Mammary epithelial cell (primary cell): ENCODE measurements at regions of chr12 and their contacts with region 1.

Region 1: DNA sequence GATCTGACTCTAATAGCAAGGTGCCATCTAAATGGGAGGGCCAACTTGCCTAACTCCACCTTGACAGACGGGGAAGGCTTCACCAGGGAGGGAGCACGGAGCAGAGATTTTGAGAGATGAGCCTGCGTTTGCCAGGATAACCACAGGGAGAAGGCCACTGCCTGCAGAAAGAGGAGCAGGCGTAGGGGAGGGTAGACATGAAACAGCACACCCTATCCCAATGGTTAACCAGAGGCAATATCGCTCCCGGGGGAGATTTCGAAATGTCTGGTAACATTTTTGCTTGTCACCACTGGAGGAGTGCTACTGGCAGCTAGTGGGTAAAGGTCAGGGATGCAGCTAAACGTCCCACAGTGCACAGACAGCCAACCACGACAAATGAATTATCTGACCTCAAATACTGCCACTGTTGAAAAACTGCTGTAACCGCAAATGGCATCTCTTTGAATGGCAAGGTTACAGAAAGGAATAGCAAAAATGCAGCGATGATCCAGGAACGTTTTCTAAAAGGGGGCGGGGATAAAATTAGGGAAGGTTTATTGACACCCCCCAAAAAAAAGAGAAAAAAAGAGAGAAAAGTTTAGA is 126.0 kb upstream of the ATF7IP start:
- DNase-seq: peak; percentile 46
- H3K4me3 ChIP-seq: no peak overlapping the region
- H3K27ac ChIP-seq: no peak overlapping the region
- H3K4me1 ChIP-seq: peaks cover 5% of the 10 kb centered on the region
- H3K27me3 ChIP-seq: no peaks in the 10 kb centered on the region
- CTCF ChIP-seq: peak in 1 of 2 donors; percentile 18

Region 2: DNA sequence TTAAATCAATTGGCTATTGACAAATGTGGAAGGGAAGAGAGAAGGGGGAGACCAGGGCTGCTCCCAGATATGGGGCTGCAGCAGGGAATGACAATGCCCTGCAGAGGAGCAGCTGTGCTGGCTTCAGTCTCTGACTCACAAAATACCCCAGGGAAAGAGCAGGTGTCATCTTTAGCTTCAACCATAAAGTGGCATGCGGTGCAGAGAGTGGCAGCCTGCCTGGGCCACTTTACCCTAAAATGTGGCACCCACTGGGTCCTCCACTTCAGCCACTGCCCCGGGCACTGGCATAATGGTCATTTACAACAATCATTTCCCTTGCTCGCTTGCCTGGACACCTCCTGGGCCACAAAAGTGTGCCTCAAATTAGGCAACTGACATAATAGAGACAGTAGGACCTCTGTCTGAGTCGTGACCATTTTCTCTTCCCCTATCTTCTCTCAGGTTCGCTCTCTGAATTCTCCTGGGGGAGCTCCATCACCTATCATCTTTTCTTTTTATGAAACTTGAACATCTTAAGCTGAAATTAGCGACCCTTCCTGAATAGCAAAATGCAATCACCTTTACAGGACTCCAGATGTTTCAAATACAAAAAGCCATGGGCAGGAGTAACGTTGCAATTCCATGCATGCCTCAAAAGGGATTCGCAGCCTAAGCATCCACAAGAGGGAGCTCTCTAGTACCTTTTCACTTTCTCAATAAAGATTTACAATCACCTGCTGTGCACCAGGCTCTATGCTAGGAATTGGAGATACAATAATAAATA is 53.8 kb before region 1 on chr12:
- CTCF ChIA-PET with region 1: no interaction called
- dilution Hi-C with region 1: no loop called
- in situ Hi-C with region 1: no loop called
- intact Hi-C with region 1: loop called (anchors 1 kb)
- DNase-seq: peak; percentile 37
- H3K4me3 ChIP-seq: no peak overlapping the region
- H3K27ac ChIP-seq: no peak overlapping the region
- H3K4me1 ChIP-seq: no peaks in the 10 kb centered on the region
- H3K27me3 ChIP-seq: no peaks in the 10 kb centered on the region
- CTCF ChIP-seq: peak; percentile 69 to 80

Region 3: DNA sequence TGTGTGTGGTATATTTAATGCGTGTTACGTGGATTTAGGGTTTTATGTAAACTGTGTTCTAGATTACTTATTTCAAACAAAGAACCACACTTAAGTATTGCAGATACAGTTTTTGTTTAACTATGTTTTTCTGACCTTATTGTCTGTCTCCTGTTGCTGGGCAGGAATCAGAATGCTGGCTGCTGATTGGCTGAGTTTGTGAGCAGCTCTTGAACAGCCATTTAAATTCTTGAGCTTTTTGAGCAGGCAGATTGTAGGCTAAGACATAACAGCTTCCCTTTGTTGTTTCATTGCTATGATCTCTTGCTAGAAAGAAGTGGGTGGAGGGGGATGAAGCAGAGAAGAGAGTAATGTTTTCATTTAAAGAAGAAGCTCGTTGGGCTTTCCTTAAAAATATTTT is 178.3 kb after region 1 on chr12:
- CTCF ChIA-PET with region 1: no interaction called
- dilution Hi-C with region 1: no loop called
- in situ Hi-C with region 1: no loop called
- intact Hi-C with region 1: loop called (anchors 1 kb)
- DNase-seq: peak; percentile 74
- H3K4me3 ChIP-seq: no peak overlapping the region
- H3K27ac ChIP-seq: no peak overlapping the region
- H3K4me1 ChIP-seq: peaks cover 10% of the 10 kb centered on the region
- H3K27me3 ChIP-seq: no peaks in the 10 kb centered on the region
- CTCF ChIP-seq: no peak

Region 4: GRCh38 chr12:14514154-14514842 is 274.9 kb after region 1 on chr12:
- CTCF ChIA-PET with region 1: interaction called, 3 read pairs
- dilution Hi-C with region 1: no loop called
- in situ Hi-C with region 1: no loop called
- intact Hi-C with region 1: loop called (anchors 1 kb)
- DNase-seq: peak; percentile 84
- H3K4me3 ChIP-seq: no peak overlapping the region
- H3K27ac ChIP-seq: peak overlapping the region; percentile 75
- H3K4me1 ChIP-seq: peaks cover 16% of the 10 kb centered on the region
- H3K27me3 ChIP-seq: no peaks in the 10 kb centered on the region
- CTCF ChIP-seq: peak; percentile 78

Region 5: DNA sequence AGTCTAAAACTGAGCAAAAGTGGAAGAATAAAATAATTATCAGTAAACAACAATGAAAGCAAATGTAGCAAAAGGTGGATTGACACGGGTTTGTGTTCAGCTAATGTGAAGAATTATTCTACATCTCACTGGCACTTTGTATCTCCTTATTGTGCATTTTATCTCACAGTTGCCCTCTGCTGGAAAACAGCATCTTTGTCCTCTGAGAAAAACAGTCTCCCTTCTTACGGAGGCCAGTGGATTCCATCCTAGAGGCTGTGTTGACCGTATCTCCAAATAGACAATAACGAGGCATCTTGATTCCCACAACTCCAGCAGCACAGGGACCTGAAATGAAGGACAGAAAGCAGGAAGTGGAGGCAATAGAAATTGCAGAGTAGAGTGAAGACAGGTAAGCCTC is 379.5 kb after region 1 on chr12:
- CTCF ChIA-PET with region 1: interaction called, 5 read pairs
- dilution Hi-C with region 1: no loop called
- in situ Hi-C with region 1: loop called in 1 of 2 experiments (anchors 25 kb)
- intact Hi-C with region 1: loop called (anchors 1 kb)
- DNase-seq: peak; percentile 24
- H3K4me3 ChIP-seq: no peak overlapping the region
- H3K27ac ChIP-seq: no peak overlapping the region
- H3K4me1 ChIP-seq: no peaks in the 10 kb centered on the region
- H3K27me3 ChIP-seq: no peaks in the 10 kb centered on the region
- CTCF ChIP-seq: peak; percentile 41 to 64

Region 6: GRCh38 chr12:14716848-14717444 is 477.5 kb after region 1 on chr12:
- CTCF ChIA-PET with region 1: interaction called, 4 read pairs
- dilution Hi-C with region 1: no loop called
- in situ Hi-C with region 1: no loop called
- intact Hi-C with region 1: loop called (anchors 1 kb)
- DNase-seq: peak; percentile 42
- H3K4me3 ChIP-seq: no peak overlapping the region
- H3K27ac ChIP-seq: no peak overlapping the region
- H3K4me1 ChIP-seq: no peaks in the 10 kb centered on the region
- H3K27me3 ChIP-seq: no peaks in the 10 kb centered on the region
- CTCF ChIP-seq: peak; percentile 34 to 59